MCF 10A (cell line): ENCODE measurements at regions of chr3 and their contacts with region 1.

Region 1: GRCh38 chr3:71495708-71496472 is 87.6 kb downstream of the FOXP1 start:
- DNase-seq: peak; percentile 89
- H3K4me3 Mint-ChIP-seq: peak overlapping the region; percentile 80
- H3K27ac Mint-ChIP-seq: peak overlapping the region; percentile 96
- H3K4me1 Mint-ChIP-seq: peaks cover 24% of the 10 kb centered on the region
- H3K27me3 Mint-ChIP-seq: no peaks in the 10 kb centered on the region
- CTCF ChIP-seq: no peak

Region 2: GRCh38 chr3:71064288-71064955 is 431.5 kb before region 1 on chr3:
- CTCF ChIA-PET with region 1: interaction called, 3 read pairs
- POLR2A ChIA-PET with region 1: interaction called, 32 read pairs
- intact Hi-C with region 1: loop called (anchors 2 kb)
- DNase-seq: peak; percentile 44
- H3K4me3 Mint-ChIP-seq: no peak overlapping the region
- H3K27ac Mint-ChIP-seq: no peak overlapping the region
- H3K4me1 Mint-ChIP-seq: peaks cover 37% of the 10 kb centered on the region
- H3K27me3 Mint-ChIP-seq: no peaks in the 10 kb centered on the region
- CTCF ChIP-seq: no peak

Region 3: DNA sequence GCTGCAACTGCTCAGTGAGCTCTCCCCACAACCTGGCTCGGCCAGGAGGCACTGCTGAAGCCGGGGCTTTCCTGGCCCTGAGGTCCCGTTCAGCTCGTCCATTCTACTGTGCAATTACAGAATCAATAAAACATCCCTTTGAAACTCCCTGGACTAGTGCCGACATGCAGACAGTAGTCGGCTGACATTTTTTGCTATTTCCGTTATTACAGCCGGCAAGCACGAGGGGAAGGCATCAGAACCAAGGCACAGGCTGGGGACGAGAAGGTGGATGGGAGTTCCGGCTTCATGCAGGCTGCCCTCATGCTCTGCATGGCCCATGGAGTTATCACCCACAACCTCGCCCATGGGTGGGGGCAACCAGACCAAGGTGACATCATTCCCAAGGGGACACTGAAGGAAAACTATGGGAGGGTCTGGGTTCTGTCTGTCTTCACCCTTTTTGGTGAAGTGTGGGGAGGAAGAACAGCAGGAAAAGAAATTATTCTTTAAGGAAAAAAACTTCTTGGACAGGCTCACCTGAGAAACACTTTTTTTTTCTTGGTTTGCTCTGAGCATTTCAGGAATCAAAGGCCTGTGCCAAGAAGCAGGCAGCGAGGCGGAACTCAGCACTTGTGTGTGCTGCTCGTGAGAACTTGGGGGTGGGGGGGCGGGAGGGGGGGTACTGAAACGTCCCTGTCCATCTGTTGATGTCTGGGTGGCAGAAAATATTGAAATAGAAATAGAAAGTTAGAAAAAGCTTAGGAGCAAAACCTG is 66.9 kb before region 1 on chr3:
- CTCF ChIA-PET with region 1: interaction called, 17 read pairs
- POLR2A ChIA-PET with region 1: interaction called, 22 read pairs
- intact Hi-C with region 1: loop called (anchors 5 kb)
- DNase-seq: peak; percentile 74
- H3K4me3 Mint-ChIP-seq: peak overlapping the region; percentile 58
- H3K27ac Mint-ChIP-seq: peak overlapping the region; percentile 87
- H3K4me1 Mint-ChIP-seq: peaks cover 59% of the 10 kb centered on the region
- H3K27me3 Mint-ChIP-seq: no peaks in the 10 kb centered on the region
- CTCF ChIP-seq: no peak

Region 4: DNA sequence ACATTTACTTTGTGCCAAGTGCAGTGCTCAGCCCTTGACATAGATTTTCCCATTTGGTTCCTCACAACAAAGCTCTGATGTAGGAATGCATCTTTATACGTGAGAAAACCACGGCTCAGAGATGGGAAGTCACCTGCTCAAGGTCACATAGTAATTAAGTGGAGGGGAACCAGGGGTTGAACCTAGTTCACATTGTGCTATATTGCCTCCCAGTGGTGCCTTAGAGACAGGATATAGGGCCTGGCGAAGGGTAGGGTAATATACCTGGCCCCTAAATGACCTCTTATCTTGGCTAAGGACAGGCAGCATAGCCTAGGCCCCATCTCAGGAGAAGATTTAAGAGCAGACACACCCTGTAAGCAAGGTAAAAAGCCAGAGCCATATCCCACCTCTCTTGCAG is 16.1 kb after region 1 on chr3:
- CTCF ChIA-PET with region 1: interaction called, 5 read pairs
- POLR2A ChIA-PET with region 1: interaction called, 18 read pairs
- intact Hi-C with region 1: no loop called
- DNase-seq: no peak
- H3K4me3 Mint-ChIP-seq: no peak overlapping the region
- H3K27ac Mint-ChIP-seq: no peak overlapping the region
- H3K4me1 Mint-ChIP-seq: peaks cover 15% of the 10 kb centered on the region
- H3K27me3 Mint-ChIP-seq: no peaks in the 10 kb centered on the region
- CTCF ChIP-seq: no peak

Region 5: GRCh38 chr3:71548705-71549384 is 53.0 kb after region 1 on chr3:
- CTCF ChIA-PET with region 1: interaction called, 3 read pairs
- POLR2A ChIA-PET with region 1: interaction called, 10 read pairs
- intact Hi-C with region 1: no loop called
- DNase-seq: no peak
- H3K4me3 Mint-ChIP-seq: no peak overlapping the region
- H3K27ac Mint-ChIP-seq: no peak overlapping the region
- H3K4me1 Mint-ChIP-seq: peaks cover 17% of the 10 kb centered on the region
- H3K27me3 Mint-ChIP-seq: no peaks in the 10 kb centered on the region
- CTCF ChIP-seq: no peak